Sciatic nerve (tissue), 2 donors: ENCODE measurements at regions of chr2 and their contacts with region 1.

Region 1: DNA sequence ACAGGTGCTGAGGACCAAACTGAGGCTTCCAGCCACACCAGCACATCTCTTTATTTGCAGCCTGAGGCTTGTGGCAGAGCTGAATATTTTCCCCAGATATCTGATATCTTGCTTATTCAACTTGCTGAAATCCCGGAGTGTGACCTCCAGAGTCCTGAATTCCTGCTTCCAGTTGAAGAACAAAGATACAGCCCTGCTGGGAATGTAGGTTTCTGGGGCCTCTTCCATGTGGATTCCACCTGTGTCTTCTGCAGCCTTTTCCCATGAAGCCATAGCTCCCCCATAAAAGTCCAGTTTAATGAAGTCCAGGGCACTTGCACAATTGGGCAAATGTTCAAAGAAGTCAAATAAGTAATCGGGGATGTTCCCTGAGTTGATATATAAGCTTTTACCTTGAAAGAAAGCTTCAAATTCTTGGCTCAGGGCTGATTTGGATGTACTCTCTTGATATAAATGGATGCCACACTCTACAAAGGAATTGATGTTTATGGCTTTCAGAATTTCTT is 14.9 kb downstream of the NLRC4 start:
- DNase-seq: no peak
- ATAC-seq: no peak

Region 2: GRCh38 chr2:32200814-32201213 is 49.0 kb before region 1 on chr2:
- intact Hi-C with region 1: loop called (anchors 2 kb)
- DNase-seq: no peak
- ATAC-seq: no peak

Region 3: DNA sequence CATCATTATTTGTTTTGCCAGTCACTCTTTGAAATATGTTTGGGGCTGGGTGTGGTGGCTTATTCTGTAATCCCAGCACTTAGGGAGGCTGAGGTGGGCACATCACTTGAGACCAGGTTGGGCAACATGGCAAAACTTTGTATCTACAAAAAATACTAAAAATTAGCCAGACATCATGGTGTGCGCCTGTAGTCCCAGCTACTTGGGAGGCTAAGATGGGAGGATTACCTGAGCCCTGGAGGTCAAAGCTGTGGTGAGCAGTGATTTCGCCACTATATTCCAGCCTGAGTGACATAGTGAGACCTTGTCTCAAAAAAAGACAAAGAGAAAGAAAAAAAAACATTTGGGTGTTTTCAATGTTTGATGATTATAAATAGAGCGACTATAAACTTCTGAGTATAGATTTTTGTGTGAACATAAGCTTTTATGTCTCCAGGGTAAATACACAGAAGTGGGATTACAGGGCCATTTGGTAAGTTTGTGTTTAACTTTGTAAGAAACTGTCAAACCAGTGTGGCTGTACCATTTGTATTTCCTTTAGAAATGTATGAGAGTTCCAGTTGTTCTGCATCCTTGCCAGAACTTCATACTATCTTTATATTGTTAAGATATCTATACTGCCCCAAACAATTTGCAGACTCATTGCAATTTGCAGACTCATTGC is 122.9 kb after region 1 on chr2:
- intact Hi-C with region 1: no loop called
- DNase-seq: no peak
- ATAC-seq: no peak